Heart right ventricle (tissue), 16 donors: ENCODE measurements at regions of chr3 and their contacts with region 1.

Region 1: DNA sequence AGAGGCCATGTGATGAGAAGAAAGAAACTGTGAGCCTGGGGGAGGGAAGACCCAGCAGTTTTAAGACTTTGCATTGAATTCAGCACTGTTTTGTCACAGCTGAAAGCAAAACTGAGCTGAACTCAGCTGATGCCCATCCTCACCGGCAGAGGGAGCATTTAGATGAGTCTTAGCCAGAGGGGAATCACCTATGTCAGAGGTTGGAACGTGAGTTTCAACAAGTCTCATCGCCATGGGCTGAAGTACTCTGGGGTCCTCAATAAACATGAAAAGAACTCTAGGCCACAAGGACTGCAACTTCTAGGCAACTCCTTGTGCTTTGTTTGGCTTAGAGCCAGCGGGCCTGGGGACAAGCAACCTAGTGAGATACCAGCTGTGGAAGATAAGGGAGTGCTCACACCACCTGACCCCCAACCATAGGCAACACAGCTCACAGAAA is 324.5 kb downstream of the TBL1XR1 start:
- DNase-seq: peak in 1 of 2 donors; percentile 45
- ATAC-seq: peak in 7 of 8 donors; percentile 61 to 75 (median 75)
- H3K4me3 ChIP-seq: no peak overlapping the region
- H3K27ac ChIP-seq: no peak overlapping the region
- H3K4me1 ChIP-seq: peaks cover 0 to 11% (median 0%) of the 10 kb centered on the region in 9 donors
- H3K27me3 ChIP-seq: no peaks in the 10 kb centered on the region
- CTCF ChIP-seq: peak; percentile 52 to 80 (median 72)

Region 2: DNA sequence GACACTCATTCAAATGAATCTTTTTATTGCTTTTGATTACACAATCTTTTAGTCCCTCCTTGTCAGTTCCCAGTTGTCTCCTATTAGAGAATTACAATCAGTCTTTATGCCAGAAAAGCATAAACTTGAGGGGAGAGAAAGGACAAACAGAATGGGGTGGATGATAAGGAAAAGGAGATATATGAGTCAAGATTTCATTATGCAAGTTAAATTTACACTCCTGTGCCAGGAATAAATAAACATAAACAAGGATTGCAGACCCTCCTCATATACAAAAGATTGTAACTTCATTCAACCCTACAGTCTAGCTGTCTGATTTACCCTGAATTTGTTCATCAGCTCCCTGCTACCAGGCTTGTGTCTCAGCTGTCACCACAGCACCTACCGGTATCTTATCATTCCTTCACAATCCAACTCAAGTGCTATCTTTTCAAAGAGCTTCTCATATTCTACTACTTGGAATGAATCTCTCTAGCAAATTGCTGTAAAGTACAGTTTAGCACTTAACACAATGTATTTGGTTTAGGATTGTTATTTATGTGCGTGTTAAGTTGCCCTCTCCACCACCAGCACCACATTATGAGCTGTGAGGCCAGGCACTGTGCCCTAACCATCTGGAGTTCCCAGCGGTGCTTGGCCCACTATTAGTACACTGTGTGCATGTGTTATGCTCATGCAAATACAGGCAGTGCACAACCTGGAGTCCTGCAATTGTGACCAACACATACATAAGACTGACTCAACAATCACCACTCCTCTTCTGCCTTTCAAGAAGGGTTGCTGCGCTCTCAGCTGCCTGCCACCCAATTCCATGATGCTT is 179.6 kb before region 1 on chr3:
- intact Hi-C with region 1: no loop called
- DNase-seq: no peak
- ATAC-seq: peak in 4 of 8 donors; percentile 52 to 89 (median 62)
- H3K4me3 ChIP-seq: no peak overlapping the region
- H3K27ac ChIP-seq: no peak overlapping the region
- H3K4me1 ChIP-seq: no peaks in the 10 kb centered on the region
- H3K27me3 ChIP-seq: no peaks in the 10 kb centered on the region
- CTCF ChIP-seq: no peak

Region 3: DNA sequence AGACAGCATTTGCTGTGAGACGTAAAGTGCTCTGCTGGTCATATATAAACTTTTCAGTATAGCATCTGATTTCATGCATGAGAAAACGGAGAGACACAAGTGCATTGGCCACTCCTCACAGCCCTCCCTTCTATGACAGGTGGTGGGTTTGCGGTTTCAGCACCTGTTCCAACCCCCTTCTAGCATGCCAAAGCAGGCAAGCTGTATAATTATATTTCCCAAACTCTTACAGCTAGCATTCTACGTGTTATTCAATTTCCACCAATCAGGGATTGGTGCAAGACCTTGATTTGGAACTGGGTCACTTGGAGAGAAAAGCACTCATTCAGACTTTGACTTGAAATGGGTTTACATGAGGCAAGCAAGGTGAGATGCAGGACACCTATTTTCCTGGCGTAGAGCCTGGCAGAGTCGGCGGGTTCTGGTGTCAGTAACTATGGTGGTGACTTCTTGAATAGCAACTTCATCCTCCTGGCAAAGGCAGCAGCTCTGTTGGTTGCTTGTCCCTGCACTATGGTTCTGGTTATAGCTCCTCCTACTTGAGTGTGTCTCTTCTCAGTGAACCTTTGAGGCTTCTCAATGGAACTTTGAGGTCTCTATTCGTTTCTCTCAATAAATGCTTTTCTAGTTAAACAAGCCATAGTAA is 32.0 kb before region 1 on chr3:
- intact Hi-C with region 1: no loop called
- DNase-seq: no peak
- ATAC-seq: no peak
- H3K4me3 ChIP-seq: no peak overlapping the region
- H3K27ac ChIP-seq: no peak overlapping the region
- H3K4me1 ChIP-seq: no peaks in the 10 kb centered on the region
- H3K27me3 ChIP-seq: no peaks in the 10 kb centered on the region
- CTCF ChIP-seq: no peak

Region 4: GRCh38 chr3:176933704-176934103 is 60.9 kb after region 1 on chr3:
- intact Hi-C with region 1: loop called in 7 of 10 experiments (anchors 2 to 10 kb)
- DNase-seq: no peak
- ATAC-seq: no peak
- H3K4me3 ChIP-seq: no peak overlapping the region
- H3K27ac ChIP-seq: no peak overlapping the region
- H3K4me1 ChIP-seq: no peaks in the 10 kb centered on the region
- H3K27me3 ChIP-seq: no peaks in the 10 kb centered on the region
- CTCF ChIP-seq: no peak